AG04450 (cell line): ENCODE measurements at regions of chr11 and their contacts with region 1.

Region 1: DNA sequence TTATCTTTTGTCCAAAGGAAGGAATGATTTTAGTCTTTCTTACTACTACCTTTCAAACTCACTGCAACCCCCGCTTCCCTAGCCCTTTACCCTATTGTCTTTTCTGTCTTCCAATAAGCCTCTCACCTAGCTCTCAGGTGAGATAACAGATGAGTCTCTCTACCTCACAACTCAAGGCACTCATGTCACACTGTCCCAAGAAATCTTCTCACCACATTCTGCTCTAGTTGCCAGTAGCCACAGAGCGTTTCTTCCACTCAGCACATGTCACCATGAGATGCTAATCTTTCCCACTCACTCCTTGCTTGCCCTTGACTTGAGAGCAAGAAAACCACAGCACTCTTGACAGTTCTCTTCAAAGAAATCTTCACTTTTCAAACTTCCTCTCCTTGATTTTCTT is 32.7 kb upstream of the TMEM41B start:
- DNase-seq: no peak
- H3K4me3 ChIP-seq: no peak overlapping the region
- H3K27ac ChIP-seq: no peak overlapping the region
- H3K27me3 ChIP-seq: peaks cover 3% of the 10 kb centered on the region
- CTCF ChIP-seq: no peak

Region 2: DNA sequence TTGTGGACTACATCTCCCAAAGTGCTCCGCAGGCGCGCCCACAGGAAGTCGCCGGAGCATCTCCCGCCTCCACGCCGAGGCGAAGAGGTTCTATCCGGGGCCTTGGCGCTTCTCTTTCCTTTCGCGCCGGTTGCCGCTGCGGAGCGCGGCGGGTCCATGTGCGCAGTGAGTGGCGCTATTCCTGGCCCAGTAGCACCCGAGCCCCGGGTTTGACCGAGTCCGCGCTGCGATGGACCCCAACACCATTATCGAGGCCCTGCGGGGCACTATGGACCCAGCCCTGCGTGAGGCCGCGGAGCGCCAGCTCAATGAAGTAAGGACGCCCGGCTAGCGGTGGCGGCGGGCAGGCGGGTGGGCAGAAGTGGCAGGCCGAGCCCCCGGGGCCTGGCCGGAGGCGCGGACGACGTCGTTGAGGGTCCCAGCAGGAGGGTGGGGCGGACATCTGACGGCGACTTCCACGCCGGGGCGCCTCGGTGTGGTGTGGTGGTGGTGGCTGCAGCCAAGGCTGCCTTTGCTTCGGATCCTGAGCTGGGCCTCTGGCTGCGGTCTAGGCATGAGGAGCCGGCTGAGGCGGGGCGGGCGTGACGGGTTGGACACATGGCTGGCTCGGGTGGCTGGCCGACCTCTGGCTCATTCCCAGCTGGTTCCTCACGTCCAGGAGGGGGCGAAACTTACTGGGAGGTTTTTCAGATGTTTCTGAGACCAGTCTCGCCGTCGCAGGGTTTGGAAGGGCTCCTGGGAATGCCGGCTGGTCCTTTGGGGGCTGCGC is 37.6 kb after region 1 on chr11 and contains the start of gene IPO7:
- CTCF ChIA-PET with region 1: no interaction called
- POLR2A ChIA-PET with region 1: interaction called, 10 read pairs
- DNase-seq: peak; percentile 68
- H3K4me3 ChIP-seq: peak within 1 kb of the TSS; percentile 93
- H3K27ac ChIP-seq: peak within 1 kb of the TSS; percentile 89
- H3K27me3 ChIP-seq: no peaks in the 10 kb centered on the region
- CTCF ChIP-seq: peak; percentile 49
- polyA plus RNA-seq, gene IPO7: 66.9 and 80.6 TPM in 2 replicates